CD8-positive, alpha-beta T cell (primary cell): ENCODE measurements at regions of chr15 and their contacts with region 1.

Region 1: GRCh38 chr15:92881802-92882696 is 18.1 kb upstream of the CHD2 start:
- DNase-seq: peak; percentile 97 to 99 (median 98)
- ATAC-seq: peak; percentile 83
- H3K4me3 ChIP-seq: peak overlapping the region; percentile 51 to 52
- H3K4me3 Mint-ChIP-seq: peak overlapping the region; percentile 87
- H3K27ac ChIP-seq: peak overlapping the region; percentile 80 to 84
- H3K27ac Mint-ChIP-seq: peak overlapping the region; percentile 99
- H3K4me1 ChIP-seq: peaks cover 49% of the 10 kb centered on the region
- H3K4me1 Mint-ChIP-seq: peaks cover 66% of the 10 kb centered on the region
- H3K27me3 ChIP-seq: no peaks in the 10 kb centered on the region
- H3K27me3 Mint-ChIP-seq: no peaks in the 10 kb centered on the region
- CTCF ChIP-seq: no peak

Region 2: GRCh38 chr15:92808978-92809879 is 72.8 kb before region 1 on chr15:
- CTCF ChIA-PET with region 1: interaction called, 57 read pairs
- POLR2A ChIA-PET with region 1: interaction called, 382 read pairs
- intact Hi-C with region 1: loop called (anchors 1 kb)
- DNase-seq: peak; percentile 97 to 100 (median 99)
- ATAC-seq: peak; percentile 76
- H3K4me3 ChIP-seq: peak overlapping the region; percentile 71 to 87
- H3K4me3 Mint-ChIP-seq: peak overlapping the region; percentile 80
- H3K27ac ChIP-seq: peak overlapping the region; percentile 94 to 98
- H3K27ac Mint-ChIP-seq: peak overlapping the region; percentile 95
- H3K4me1 ChIP-seq: peaks cover 47% of the 10 kb centered on the region
- H3K4me1 Mint-ChIP-seq: peaks cover 45% of the 10 kb centered on the region
- H3K27me3 ChIP-seq: no peaks in the 10 kb centered on the region
- H3K27me3 Mint-ChIP-seq: no peaks in the 10 kb centered on the region
- CTCF ChIP-seq: peak; percentile 92

Region 3: DNA sequence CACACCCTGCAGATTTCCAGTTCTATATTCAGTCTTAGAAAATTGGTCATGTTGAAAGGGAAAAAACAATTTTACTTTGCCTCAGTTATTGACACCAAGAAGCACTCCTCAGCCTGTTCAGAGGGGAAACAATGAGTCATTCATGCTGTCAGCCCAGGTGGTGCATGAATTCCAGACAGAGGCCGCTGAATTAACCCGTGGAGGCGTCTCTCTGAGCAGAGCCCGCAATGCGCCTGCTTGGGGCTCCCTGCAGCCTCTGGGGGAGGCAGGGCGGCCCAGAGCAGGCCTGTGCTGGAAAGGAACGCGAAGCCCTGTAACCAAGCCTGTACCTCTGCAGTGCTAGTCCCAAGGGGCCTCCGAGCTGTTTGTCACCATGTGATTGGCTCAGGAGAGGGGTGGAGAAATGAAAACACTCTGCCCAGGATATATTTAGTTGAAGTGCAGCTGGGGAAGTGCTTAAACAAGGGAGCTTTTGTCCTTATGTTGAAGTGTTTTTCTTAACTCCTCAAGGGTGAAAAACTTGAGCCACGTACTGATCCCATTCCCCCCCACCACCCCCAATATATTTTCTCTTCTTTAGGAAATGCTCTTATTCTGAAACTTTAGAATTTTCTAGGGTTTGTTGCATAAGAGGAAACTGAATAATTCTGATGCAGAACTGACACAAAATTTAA is 50.3 kb before region 1 on chr15:
- CTCF ChIA-PET with region 1: interaction called, 16 read pairs
- POLR2A ChIA-PET with region 1: interaction called, 148 read pairs
- intact Hi-C with region 1: loop called (anchors 1 kb)
- DNase-seq: peak; percentile 72 to 96 (median 90)
- ATAC-seq: peak; percentile 93
- H3K4me3 ChIP-seq: peak overlapping the region; percentile 15 to 41
- H3K4me3 Mint-ChIP-seq: peak overlapping the region; percentile 72
- H3K27ac ChIP-seq: peak overlapping the region; percentile 67 to 80
- H3K27ac Mint-ChIP-seq: peak overlapping the region; percentile 96
- H3K4me1 ChIP-seq: peaks cover 42% of the 10 kb centered on the region
- H3K4me1 Mint-ChIP-seq: peaks cover 44% of the 10 kb centered on the region
- H3K27me3 ChIP-seq: no peaks in the 10 kb centered on the region
- H3K27me3 Mint-ChIP-seq: no peaks in the 10 kb centered on the region
- CTCF ChIP-seq: no peak

Region 4: DNA sequence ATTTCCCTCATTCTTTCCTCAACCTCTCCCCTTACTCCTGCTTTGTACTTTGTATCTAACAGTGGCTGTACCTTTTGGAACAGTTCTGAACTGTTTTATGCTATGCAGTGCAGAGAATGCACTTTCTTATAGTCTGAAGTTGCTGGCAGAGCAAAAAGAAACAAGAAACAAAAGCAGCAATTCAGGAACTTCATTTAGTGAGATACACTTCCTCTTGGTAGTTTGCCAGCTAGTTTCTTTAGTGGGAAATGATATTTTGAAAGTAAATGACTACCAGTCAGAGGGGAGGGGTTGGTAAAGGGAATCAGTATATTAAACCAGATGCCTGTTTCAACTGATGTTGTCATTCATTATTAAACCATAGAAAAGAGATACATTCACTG is 36.9 kb before region 1 on chr15:
- CTCF ChIA-PET with region 1: interaction called, 4 read pairs
- POLR2A ChIA-PET with region 1: interaction called, 89 read pairs
- intact Hi-C with region 1: loop called (anchors 1 to 2 kb)
- DNase-seq: peak in 2 of 9 experiments; percentile 57 to 79
- ATAC-seq: peak; percentile 34
- H3K4me3 ChIP-seq: peak overlapping the region in 1 of 2 experiments; percentile 4
- H3K4me3 Mint-ChIP-seq: peak overlapping the region; percentile 72
- H3K27ac ChIP-seq: peak overlapping the region; percentile 23 to 46
- H3K27ac Mint-ChIP-seq: peak overlapping the region; percentile 93
- H3K4me1 ChIP-seq: peaks cover 71% of the 10 kb centered on the region
- H3K4me1 Mint-ChIP-seq: peaks cover 75% of the 10 kb centered on the region
- H3K27me3 ChIP-seq: no peaks in the 10 kb centered on the region
- H3K27me3 Mint-ChIP-seq: no peaks in the 10 kb centered on the region
- CTCF ChIP-seq: no peak

Region 5: GRCh38 chr15:92896561-92896960 is 14.5 kb after region 1 on chr15:
- CTCF ChIA-PET with region 1: interaction called, 12 read pairs
- POLR2A ChIA-PET with region 1: interaction called, 319 read pairs
- intact Hi-C with region 1: loop called (anchors 1 kb)
- DNase-seq: no peak
- ATAC-seq: no peak
- H3K4me3 ChIP-seq: no peak overlapping the region
- H3K4me3 Mint-ChIP-seq: peak overlapping the region; percentile 32
- H3K27ac ChIP-seq: peak overlapping the region; percentile 25 to 38
- H3K27ac Mint-ChIP-seq: peak overlapping the region; percentile 60
- H3K4me1 ChIP-seq: peaks cover 72% of the 10 kb centered on the region
- H3K4me1 Mint-ChIP-seq: peaks cover 70% of the 10 kb centered on the region
- H3K27me3 ChIP-seq: no peaks in the 10 kb centered on the region
- H3K27me3 Mint-ChIP-seq: no peaks in the 10 kb centered on the region
- CTCF ChIP-seq: no peak

Region 6: DNA sequence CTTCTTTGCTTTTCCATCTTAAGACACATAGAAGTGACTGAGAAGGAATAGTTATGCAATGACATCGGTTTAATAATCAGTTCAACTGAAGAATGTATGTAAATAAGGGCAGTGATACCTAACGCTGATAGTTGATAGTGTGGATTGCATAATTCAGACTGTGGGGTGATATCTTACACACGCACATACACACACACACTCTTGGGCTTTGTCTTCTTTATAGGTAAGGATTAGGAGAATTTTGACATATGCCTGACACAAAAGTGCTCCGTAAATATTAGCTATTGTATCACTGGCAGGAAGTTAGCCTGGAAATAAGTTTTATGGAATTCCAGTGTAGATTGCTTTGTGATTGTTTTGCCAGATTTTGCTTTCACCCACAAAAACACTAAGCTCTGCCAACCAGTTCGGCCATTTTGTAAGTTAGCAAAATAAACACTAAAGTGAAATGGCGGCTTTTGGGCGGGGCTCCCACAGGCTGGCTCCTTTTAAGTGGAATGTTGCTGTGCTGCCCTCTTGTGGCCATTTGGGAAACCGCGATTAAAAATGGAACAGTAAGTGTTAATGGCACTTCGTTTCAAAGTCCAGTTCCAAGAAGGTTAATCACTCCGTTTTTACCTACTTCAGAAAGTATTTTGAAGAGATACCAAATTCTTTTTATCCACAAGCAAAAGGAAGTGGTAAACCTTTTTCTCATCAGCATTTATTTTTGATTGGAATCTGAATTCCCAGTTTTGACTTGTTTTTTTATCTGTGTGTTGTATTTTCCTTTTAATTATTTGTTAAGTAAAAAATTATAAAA is 35.8 kb after region 1 on chr15:
- CTCF ChIA-PET with region 1: interaction called, 12 read pairs
- POLR2A ChIA-PET with region 1: interaction called, 85 read pairs
- intact Hi-C with region 1: loop called in 1 of 2 experiments (anchors 1 kb)
- DNase-seq: peak; percentile 85 to 94 (median 91)
- ATAC-seq: peak; percentile 17
- H3K4me3 ChIP-seq: no peak overlapping the region
- H3K4me3 Mint-ChIP-seq: peak overlapping the region; percentile 56
- H3K27ac ChIP-seq: peak overlapping the region; percentile 22 to 96
- H3K27ac Mint-ChIP-seq: peak overlapping the region; percentile 94
- H3K4me1 ChIP-seq: peaks cover 76% of the 10 kb centered on the region
- H3K4me1 Mint-ChIP-seq: peaks cover 86% of the 10 kb centered on the region
- H3K27me3 ChIP-seq: no peaks in the 10 kb centered on the region
- H3K27me3 Mint-ChIP-seq: no peaks in the 10 kb centered on the region
- CTCF ChIP-seq: peak; percentile 95